Heart right ventricle (tissue), 16 donors: ENCODE measurements at regions of chr15 and their contacts with region 1.

Region 1: GRCh38 chr15:90214553-90215196 is 13.5 kb downstream of the SEMA4B start:
- DNase-seq: no peak
- ATAC-seq: no peak
- H3K4me3 ChIP-seq: no peak overlapping the region
- H3K27ac ChIP-seq: no peak overlapping the region
- H3K4me1 ChIP-seq: peaks cover 7 to 48% (median 26%) of the 10 kb centered on the region in 9 donors
- H3K27me3 ChIP-seq: no peaks in the 10 kb centered on the region
- CTCF ChIP-seq: peak in 5 of 9 donors; percentile 10 to 31 (median 17)

Region 2: DNA sequence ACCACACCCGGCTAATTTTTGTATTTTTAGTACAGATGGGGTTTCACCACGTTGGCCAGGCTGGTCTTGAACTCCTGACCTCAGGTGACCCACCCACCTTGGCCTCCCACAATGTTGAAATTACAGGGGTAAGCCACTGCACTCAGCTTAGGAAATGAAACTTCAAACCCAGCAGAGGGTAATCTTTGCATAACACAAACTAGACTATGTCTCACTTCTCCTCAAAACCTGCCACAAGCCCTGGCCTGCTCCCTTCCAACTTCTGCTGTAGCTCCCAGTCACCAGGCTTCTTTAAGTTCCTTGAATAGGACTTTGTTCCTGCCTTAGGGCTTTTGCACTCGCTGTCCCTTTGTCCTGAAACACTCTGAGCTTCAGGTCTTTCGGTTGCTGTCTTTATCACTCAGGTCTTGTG is 52.7 kb before region 1 on chr15:
- intact Hi-C with region 1: loop called in 1 of 10 experiments (anchors 5 kb)
- DNase-seq: no peak
- ATAC-seq: no peak
- H3K4me3 ChIP-seq: no peak overlapping the region
- H3K27ac ChIP-seq: peak overlapping the region in 1 of 10 donors; percentile 31
- H3K4me1 ChIP-seq: peaks cover 0 to 66% (median 9%) of the 10 kb centered on the region in 9 donors
- H3K27me3 ChIP-seq: no peaks in the 10 kb centered on the region
- CTCF ChIP-seq: no peak

Region 3: DNA sequence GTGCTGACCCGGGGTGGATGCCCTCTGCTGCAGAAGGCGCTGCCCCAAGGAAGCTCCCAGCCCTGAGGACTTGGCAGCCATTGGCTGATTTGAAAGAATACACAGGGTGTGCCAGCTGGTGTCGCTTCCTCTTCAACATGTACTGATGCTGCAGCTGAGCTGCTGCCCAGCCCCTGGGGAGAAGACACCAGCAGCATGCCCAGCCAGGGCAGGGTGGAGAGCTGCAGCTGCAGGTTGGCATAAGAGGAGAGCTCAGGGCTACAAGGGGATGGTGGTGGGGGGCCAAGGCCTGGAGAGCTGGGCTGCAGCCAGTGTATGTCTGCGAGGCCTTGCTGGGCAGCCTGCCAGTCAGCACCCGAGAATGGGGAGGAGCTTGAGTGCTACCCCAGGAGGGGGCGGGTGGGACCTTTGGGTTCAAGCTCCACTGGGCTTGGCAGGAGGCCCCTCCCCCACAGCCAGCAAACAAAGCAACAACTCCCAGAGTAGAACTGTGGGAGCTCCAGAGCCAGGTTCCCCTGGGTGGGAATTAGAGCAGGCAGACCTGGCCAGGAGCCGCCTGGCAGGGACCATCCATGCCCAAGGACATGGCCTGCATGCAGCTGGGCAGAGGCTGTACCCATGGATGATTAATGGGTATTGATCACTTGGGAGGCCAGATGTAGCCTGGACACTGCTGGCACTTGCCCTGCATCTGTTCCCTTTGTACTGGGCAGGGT is 22.7 kb before region 1 on chr15:
- intact Hi-C with region 1: no loop called
- DNase-seq: peak; percentile 63 to 74
- ATAC-seq: peak; percentile 77 to 93 (median 81)
- H3K4me3 ChIP-seq: no peak overlapping the region
- H3K27ac ChIP-seq: peak overlapping the region; percentile 44 to 80 (median 60)
- H3K4me1 ChIP-seq: peaks cover 10 to 71% (median 27%) of the 10 kb centered on the region in 9 donors
- H3K27me3 ChIP-seq: no peaks in the 10 kb centered on the region
- CTCF ChIP-seq: no peak